SK-N-SH (cell line): ENCODE measurements at regions of chr7 and their contacts with region 1.

Region 1: GRCh38 chr7:55280031-55280454 is 85.1 kb upstream of the LANCL2 start:
- DNase-seq: peak; percentile 81
- H3K4me3 ChIP-seq: no peak overlapping the region
- H3K27ac ChIP-seq: no peak overlapping the region
- H3K4me1 ChIP-seq: no peaks in the 10 kb centered on the region
- H3K27me3 ChIP-seq: no peaks in the 10 kb centered on the region
- CTCF ChIP-seq: peak; percentile 95
- EP300 ChIP-seq: no peak
- RAD21 ChIP-seq: peak; percentile 98

Region 2: DNA sequence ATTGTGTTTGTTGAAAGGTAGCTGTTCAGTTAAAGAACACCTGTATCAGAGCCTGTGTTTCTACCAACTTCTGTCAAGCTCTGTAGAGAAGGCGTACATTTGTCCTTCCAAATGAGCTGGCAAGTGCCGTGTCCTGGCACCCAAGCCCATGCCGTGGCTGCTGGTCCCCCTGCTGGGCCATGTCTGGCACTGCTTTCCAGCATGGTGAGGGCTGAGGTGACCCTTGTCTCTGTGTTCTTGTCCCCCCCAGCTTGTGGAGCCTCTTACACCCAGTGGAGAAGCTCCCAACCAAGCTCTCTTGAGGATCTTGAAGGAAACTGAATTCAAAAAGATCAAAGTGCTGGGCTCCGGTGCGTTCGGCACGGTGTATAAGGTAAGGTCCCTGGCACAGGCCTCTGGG is 106.4 kb before region 1 on chr7:
- CTCF ChIA-PET with region 1: no interaction called
- POLR2A ChIA-PET with region 1: no interaction called
- DNase-seq: no peak
- H3K4me3 ChIP-seq: no peak overlapping the region
- H3K27ac ChIP-seq: no peak overlapping the region
- H3K4me1 ChIP-seq: peaks cover 0 to 16% of the 10 kb centered on the region in 2 experiments; a peak in 2 of 4 replicates
- H3K27me3 ChIP-seq: no peaks in the 10 kb centered on the region
- CTCF ChIP-seq: peak; percentile 32; the same call in 1 of the 2 replicates
- EP300 ChIP-seq: no peak
- RAD21 ChIP-seq: no peak

Region 3: DNA sequence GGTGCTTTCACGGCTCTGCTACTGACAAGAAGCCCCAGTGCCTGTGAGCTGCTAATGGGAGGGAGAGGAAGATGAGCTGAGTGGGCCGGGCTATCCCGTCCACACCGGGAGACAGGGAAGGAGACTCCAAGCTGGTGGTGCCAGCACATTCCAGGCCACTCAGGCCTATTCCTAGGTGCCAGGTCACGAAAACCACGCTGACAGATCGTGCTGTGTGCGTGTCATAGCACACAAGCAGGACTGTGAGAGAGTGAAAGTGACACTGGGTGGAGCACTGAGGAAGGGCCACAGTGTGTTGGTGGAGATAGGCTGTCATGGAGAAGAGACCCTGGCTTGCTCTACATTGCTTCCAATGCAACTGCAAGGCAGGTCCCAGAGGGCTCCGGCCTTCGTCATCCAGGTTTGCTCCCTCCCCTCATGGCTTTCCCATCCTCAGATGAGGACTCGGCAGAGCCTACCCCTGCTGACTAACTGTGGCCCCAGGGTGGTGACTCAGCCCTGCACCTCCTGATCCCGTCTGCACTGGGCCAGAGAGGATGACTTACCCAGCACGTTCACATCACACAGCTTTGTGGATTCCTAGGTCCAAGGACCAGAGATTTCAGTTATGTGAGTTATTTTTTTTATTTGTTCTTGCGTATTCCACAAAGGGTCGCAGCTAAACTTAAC is 94.0 kb before region 1 on chr7:
- CTCF ChIA-PET with region 1: no interaction called
- POLR2A ChIA-PET with region 1: no interaction called
- DNase-seq: no peak
- H3K4me3 ChIP-seq: no peak overlapping the region
- H3K27ac ChIP-seq: peak overlapping the region in 1 of 2 experiments; percentile 62; a peak in 3 of 4 replicates
- H3K4me1 ChIP-seq: peaks cover 14 to 35% of the 10 kb centered on the region in 2 experiments
- H3K27me3 ChIP-seq: no peaks in the 10 kb centered on the region
- CTCF ChIP-seq: no peak
- EP300 ChIP-seq: peak in 1 of 2 experiments; percentile 52; a peak in 1 of 4 replicates
- RAD21 ChIP-seq: no peak

Region 4: GRCh38 chr7:55309040-55309991 is 29.3 kb after region 1 on chr7:
- CTCF ChIA-PET with region 1: interaction called, 20 read pairs
- POLR2A ChIA-PET with region 1: no interaction called
- DNase-seq: no peak
- H3K4me3 ChIP-seq: no peak overlapping the region
- H3K27ac ChIP-seq: peak overlapping the region; percentile 60 to 71; a peak in 2 of 4 replicates
- H3K4me1 ChIP-seq: peaks cover 0 to 20% of the 10 kb centered on the region in 2 experiments; a peak in 2 of 4 replicates
- H3K27me3 ChIP-seq: no peaks in the 10 kb centered on the region
- CTCF ChIP-seq: no peak
- EP300 ChIP-seq: no peak
- RAD21 ChIP-seq: no peak

Region 5: DNA sequence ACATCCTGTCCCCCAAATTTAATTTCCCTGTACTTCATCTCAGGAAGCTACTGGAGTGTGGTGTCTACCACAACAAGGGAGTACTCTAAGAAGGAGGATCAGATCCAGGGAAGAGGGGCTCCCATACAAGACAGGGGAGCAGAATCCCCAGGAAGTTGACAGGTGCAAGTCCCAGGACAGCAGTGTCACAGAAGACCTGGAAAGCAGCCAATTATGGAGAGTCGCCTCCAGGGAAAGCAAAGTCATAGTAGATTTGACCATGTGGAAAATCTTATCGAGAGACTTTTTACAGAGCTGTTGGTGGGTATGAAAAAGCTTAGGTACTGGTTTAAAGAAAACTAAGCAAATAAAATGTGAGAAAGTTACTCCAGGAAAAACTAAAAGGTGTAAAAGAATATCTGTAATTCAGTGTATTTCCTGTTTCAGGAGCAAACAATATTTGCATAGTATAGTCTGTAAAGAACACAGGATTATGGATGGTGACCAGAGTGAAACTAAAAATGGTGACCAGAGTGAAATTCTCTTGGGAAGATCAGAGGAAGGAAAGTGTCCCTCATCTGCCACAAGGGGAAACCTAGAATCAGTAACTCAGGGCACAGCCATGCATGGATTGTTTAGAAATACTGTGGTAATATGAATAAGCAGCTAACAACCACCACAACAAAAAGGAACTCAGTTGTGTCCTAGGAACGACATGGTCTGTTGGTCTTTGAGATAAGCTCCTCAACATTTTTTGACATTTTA is 129.6 kb after region 1 on chr7:
- CTCF ChIA-PET with region 1: interaction called, 166 read pairs
- POLR2A ChIA-PET with region 1: no interaction called
- DNase-seq: peak; percentile 54
- H3K4me3 ChIP-seq: no peak overlapping the region
- H3K27ac ChIP-seq: no peak overlapping the region
- H3K4me1 ChIP-seq: peaks cover 0 to 5% of the 10 kb centered on the region in 2 experiments; a peak in 1 of 4 replicates
- H3K27me3 ChIP-seq: no peaks in the 10 kb centered on the region
- CTCF ChIP-seq: peak; percentile 16; the same call in 1 of the 2 replicates
- EP300 ChIP-seq: no peak
- RAD21 ChIP-seq: no peak

Region 6: DNA sequence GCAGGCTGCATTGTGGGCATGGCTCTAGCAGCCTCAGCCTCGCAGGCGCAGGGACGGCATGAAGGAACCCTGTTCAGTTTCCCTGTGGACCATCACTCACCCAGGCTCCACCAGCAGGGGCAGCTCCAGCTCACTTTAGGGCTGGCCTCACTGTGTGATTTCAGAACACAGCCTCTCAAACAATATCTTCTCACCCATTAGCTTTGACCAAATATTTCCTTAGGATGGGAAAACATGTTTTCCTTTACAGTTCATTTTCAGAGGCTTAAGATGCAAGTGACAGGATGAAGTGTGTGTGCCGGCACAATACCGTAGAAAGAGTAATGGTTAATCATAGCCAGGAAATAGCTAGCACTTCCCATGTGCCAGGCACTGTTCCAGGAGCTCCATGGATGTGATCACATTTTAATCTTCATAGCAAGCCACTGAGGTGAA is 143.3 kb after region 1 on chr7:
- CTCF ChIA-PET with region 1: interaction called, 18 read pairs
- POLR2A ChIA-PET with region 1: no interaction called
- DNase-seq: no peak
- H3K4me3 ChIP-seq: no peak overlapping the region
- H3K27ac ChIP-seq: no peak overlapping the region
- H3K4me1 ChIP-seq: peaks cover 0 to 2% of the 10 kb centered on the region in 2 experiments; a peak in 1 of 4 replicates
- H3K27me3 ChIP-seq: no peaks in the 10 kb centered on the region
- CTCF ChIP-seq: peak; percentile 26
- EP300 ChIP-seq: no peak
- RAD21 ChIP-seq: no peak

Region 7: DNA sequence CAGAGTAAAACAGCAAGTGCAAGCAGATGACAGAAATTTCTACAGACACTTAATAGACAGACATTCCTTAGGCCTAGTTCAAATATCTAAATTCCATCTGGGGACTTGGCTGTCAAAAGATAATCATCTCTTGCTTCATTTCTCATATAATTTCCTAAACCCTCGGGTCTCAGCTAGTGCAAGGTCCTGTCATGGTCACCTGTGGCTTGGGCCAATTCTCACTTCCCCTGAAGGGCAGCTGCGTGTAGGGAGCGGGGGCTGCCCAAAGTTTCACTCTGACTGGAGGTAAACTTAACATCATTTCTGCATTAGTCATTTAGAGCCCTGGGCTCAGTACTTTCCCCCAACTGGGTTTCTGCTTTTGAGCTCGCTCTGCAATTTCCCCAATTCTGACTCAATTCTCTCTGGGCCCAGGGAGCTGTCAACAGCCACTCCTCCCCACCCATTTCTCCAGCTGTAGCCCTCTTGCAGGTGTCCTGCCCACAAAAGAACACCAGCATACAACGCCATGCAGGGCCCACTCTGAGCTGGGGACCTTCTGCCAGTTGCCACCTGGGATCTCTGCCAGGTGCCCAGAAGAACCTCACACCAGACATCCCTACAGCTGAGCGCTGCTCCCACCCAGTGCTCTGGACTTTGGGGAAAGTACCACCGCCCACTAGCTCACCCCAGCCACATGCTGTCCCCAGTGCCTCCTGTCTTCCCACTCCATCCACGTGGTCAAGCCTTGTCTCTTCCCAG is 254.3 kb after region 1 on chr7:
- CTCF ChIA-PET with region 1: no interaction called
- POLR2A ChIA-PET with region 1: no interaction called
- DNase-seq: no peak
- H3K4me3 ChIP-seq: no peak overlapping the region
- H3K27ac ChIP-seq: peak overlapping the region; percentile 24 to 31; a peak in 2 of 4 replicates
- H3K4me1 ChIP-seq: peaks cover 28 to 43% of the 10 kb centered on the region in 2 experiments
- H3K27me3 ChIP-seq: no peaks in the 10 kb centered on the region
- CTCF ChIP-seq: no peak
- EP300 ChIP-seq: peak in 1 of 2 experiments; percentile 18; a peak in 1 of 4 replicates
- RAD21 ChIP-seq: no peak

Region 8: GRCh38 chr7:55774326-55775064 is 494.5 kb after region 1 on chr7:
- CTCF ChIA-PET with region 1: no interaction called
- POLR2A ChIA-PET with region 1: no interaction called
- DNase-seq: peak; percentile 33
- H3K4me3 ChIP-seq: no peak overlapping the region
- H3K27ac ChIP-seq: no peak overlapping the region
- H3K4me1 ChIP-seq: no peaks in the 10 kb centered on the region
- H3K27me3 ChIP-seq: no peaks in the 10 kb centered on the region; the same call in 1 of the 2 replicates
- CTCF ChIP-seq: no peak
- EP300 ChIP-seq: no peak
- RAD21 ChIP-seq: no peak